Endothelial cell of umbilical vein (primary cell): ENCODE measurements at regions of chr17 and their contacts with region 1.

Region 1: GRCh38 chr17:28335201-28335955 is at the starts of genes IFT20 and TNFAIP1:
- DNase-seq: peak; percentile 100
- H3K4me3 ChIP-seq: peak within 1 kb of the TSS; percentile 75 to 98 (median 88)
- H3K27ac ChIP-seq: peak within 1 kb of the TSS; percentile 86
- H3K4me1 ChIP-seq: peaks cover 40% of the 10 kb centered on the region
- H3K27me3 ChIP-seq: no peaks in the 10 kb centered on the region
- CTCF ChIP-seq: no peak
- POLR2A ChIP-seq: peak; percentile 80
- total RNA-seq, gene IFT20: 36.3 and 45.0 TPM in 2 replicates
- total RNA-seq, gene TNFAIP1: 79.5 and 89.6 TPM in 2 replicates

Region 2: DNA sequence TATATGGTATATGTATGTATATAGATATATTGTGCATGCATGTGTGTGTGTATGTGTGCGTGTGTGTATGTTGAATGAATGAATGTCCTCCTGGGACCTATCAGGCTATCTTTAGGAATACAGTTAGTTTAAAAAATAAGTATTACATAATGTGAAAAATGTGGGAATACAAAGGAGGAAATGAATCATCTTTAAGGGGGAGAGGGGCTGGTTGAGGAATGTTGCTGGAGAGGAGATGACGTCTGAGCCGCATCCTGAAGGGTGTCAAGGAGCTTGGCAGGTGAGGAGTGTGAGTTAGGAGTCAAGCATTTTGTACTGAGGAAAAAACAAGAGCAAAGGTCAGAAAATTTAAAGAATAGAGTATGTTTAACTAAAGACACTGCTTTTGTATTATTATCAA is 355.3 kb before region 1 on chr17:
- CTCF ChIA-PET with region 1: no interaction called
- POLR2A ChIA-PET with region 1: interaction called, 3 read pairs
- dilution Hi-C with region 1: no loop called
- intact Hi-C with region 1: loop called (anchors 1 kb)
- DNase-seq: peak; percentile 99
- H3K4me3 ChIP-seq: no peak overlapping the region
- H3K27ac ChIP-seq: peak overlapping the region; percentile 91
- H3K4me1 ChIP-seq: peaks cover 52% of the 10 kb centered on the region
- H3K27me3 ChIP-seq: no peaks in the 10 kb centered on the region
- CTCF ChIP-seq: no peak
- POLR2A ChIP-seq: peak; percentile 47

Region 3: GRCh38 chr17:28041068-28041843 is 294.1 kb before region 1 on chr17:
- CTCF ChIA-PET with region 1: no interaction called
- POLR2A ChIA-PET with region 1: interaction called, 9 read pairs
- dilution Hi-C with region 1: no loop called
- intact Hi-C with region 1: loop called (anchors 5 kb)
- DNase-seq: peak; percentile 100
- H3K4me3 ChIP-seq: peak overlapping the region in 1 of 3 experiments; percentile 95
- H3K27ac ChIP-seq: no peak overlapping the region
- H3K4me1 ChIP-seq: peaks cover 31% of the 10 kb centered on the region
- H3K27me3 ChIP-seq: no peaks in the 10 kb centered on the region
- CTCF ChIP-seq: no peak
- POLR2A ChIP-seq: peak; percentile 87

Region 4: DNA sequence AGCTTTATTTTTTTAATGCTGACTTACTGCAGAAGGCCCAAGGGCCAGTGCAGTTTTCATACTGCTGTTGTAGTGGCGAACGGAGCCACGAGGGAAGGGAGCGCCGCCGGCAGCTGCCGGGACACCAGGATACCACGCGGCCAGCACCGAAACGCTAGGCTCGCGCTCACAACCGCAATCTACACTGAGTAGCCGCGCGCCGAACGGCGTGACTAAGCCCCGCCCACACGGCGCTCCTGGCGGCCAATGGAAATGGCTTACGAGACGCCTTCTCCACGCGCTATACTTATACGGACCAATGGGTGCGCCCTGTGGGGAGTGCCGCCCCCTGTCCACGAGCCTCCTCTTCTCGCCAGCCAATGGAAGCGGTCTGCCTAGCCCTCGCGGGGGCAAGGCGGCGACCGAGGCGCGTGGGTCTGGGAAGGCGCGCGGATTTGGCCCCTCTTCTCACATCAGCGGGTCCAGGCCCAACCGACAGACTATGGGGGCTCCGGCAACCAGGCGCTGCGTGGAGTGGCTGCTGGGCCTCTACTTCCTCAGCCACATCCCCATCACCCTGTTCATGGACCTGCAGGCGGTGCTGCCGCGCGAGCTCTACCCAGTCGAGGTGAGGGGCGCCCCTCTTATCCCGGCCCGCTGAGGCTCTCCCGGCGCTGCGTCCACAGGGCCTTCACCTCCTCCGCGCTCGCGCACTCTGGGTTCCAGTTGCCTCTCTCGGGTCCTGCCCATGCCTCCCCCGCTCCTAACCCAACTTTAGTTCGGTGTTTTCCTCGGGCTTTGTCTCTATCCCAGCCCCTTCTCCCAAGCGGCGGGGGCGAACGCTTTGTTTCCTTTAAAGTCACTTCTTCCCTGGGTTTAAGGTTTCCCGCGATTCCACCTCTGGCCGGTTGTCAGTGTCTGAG is 16.4 kb before region 1 on chr17 and contains the start of gene TMEM97:
- CTCF ChIA-PET with region 1: interaction called, 8 read pairs
- POLR2A ChIA-PET with region 1: interaction called, 3 read pairs
- dilution Hi-C with region 1: no loop called
- intact Hi-C with region 1: loop called (anchors 1 kb)
- DNase-seq: peak; percentile 98
- H3K4me3 ChIP-seq: peak within 1 kb of the TSS; percentile 52 to 80 (median 65)
- H3K27ac ChIP-seq: peak within 1 kb of the TSS; percentile 9
- H3K4me1 ChIP-seq: peaks cover 18% of the 10 kb centered on the region
- H3K27me3 ChIP-seq: peaks cover 0 to under 1% of the 10 kb centered on the region in 2 experiments
- CTCF ChIP-seq: no peak
- POLR2A ChIP-seq: peak; percentile 47
- total RNA-seq, gene TMEM97: 43.5 and 51.7 TPM in 2 replicates

Region 5: GRCh38 chr17:28346746-28347246 is 11.4 kb after region 1 on chr17:
- CTCF ChIA-PET with region 1: interaction called, 31 read pairs
- POLR2A ChIA-PET with region 1: interaction called, 34 read pairs
- dilution Hi-C with region 1: no loop called
- intact Hi-C with region 1: loop called (anchors 1 kb)
- DNase-seq: peak; percentile 90
- H3K4me3 ChIP-seq: no peak overlapping the region
- H3K27ac ChIP-seq: peak overlapping the region; percentile 88
- H3K4me1 ChIP-seq: peaks cover 32% of the 10 kb centered on the region
- H3K27me3 ChIP-seq: no peaks in the 10 kb centered on the region
- CTCF ChIP-seq: peak; percentile 59 to 61
- POLR2A ChIP-seq: no peak

Region 6: DNA sequence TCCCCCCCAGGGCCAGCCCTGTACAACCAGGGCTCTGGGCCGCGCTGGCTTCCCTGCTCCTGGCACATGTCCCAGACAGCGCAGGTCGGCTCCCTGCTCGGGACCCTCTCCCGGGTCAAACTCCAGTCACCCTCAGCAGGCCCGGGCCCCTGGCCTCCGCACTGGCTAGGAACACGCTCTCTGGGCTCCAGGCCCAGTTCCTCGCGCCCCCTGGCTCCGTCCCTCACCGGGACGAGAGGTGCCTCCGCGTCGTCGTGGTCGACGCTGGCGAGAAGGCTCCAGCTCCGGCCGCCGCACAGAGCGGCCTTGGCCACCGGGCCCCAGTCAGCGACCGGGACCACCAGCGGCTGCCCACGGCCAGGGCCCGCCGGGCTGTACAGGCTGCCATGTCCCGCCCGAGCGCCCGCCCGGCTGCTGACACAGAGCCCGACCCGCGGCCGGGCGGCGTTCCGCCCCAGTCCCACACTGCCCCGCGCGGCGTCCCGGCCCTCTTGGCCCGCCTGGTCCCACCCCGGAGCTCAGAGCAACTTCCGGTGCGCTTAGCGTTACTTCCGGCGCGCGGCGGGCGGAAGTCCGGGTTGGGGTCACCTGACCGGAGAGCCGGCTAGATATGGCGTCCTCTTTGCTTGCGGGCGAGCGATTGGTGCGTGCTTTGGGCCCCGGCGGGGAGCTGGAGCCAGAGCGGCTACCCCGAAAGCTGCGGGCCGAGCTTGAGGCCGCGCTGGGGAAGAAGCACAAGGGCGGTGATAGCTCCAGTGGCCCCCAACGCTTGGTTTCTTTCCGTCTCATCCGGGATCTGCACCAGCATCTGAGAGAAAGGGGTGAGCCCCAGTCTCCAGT is 21.9 kb after region 1 on chr17 and contains the start of gene POLDIP2:
- CTCF ChIA-PET with region 1: interaction called, 12 read pairs
- POLR2A ChIA-PET with region 1: interaction called, 26 read pairs
- dilution Hi-C with region 1: no loop called
- intact Hi-C with region 1: loop called (anchors 1 kb)
- DNase-seq: peak; percentile 95
- H3K4me3 ChIP-seq: peak within 1 kb of the TSS; percentile 89 to 98 (median 91)
- H3K27ac ChIP-seq: peak within 1 kb of the TSS; percentile 92
- H3K4me1 ChIP-seq: peaks cover 17% of the 10 kb centered on the region
- H3K27me3 ChIP-seq: no peaks in the 10 kb centered on the region
- CTCF ChIP-seq: no peak
- POLR2A ChIP-seq: peak; percentile 96
- total RNA-seq, gene POLDIP2: 81.0 and 85.2 TPM in 2 replicates